ENCODE measurements at regions of chr1 and their contacts with region 1.

Region 1: DNA sequence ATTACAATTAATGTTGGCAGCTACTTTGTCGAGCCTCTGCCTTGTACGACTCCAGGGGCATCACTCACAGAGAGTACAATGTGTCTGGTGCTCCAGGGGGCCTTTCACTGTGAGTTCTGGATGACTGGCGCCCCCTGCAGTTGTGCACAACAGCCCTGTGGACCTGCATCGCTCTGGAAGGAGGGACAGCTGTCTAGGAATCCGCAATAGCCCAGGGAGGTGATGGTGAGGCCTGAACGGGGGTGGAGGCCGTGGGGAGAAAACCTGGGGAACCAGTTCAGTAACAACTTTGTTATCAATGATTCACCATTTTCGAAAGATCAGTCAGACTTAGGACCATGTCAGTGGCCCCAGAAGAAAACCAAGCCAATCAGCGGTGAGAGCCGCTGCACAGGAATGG is 189.1 kb downstream of the KAZN start:
- DNase-seq: peak; percentile 55
- H3K4me3 Mint-ChIP-seq: no peak overlapping the region
- H3K27ac Mint-ChIP-seq: no peak overlapping the region
- H3K4me1 Mint-ChIP-seq: peaks cover 17% of the 10 kb centered on the region
- H3K27me3 Mint-ChIP-seq: peaks cover 12% of the 10 kb centered on the region
- CTCF ChIP-seq: no peak

Region 2: DNA sequence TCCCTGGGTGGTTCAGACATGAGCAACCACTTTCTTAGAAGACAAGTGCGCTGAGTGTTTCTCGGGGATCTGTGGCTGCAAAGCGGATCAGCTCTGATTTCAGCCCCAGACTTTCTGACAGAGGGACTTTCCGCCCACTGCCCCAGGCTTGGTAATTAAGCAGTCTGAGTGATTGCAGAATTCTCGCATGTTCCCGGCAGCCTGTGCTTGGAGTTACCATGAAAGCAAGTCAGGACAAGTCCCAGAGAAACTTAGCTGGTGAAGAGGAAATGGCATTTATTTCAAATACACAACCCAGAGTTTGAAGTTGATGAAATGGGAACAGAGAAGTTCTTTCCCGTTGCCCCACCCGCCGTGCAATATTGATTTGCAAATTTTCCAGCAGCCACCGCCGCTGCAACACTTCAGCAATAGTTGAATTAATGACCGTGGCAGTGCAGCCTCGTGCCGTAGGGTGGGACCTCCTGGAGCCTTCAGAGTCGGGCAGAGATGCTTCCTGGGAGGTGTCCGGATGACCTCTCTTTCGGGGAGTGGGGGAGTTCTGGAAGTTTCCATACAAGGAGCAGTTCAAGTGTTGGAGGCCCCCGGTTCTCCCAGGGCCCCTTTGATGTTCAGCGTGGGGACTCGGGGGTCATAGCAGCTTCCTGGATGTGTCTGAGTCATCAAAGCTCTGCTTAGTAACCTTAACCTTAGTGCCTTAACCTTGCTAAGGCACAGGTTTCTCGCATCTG is 54.4 kb before region 1 on chr1:
- CTCF ChIA-PET with region 1: no interaction called
- intact Hi-C with region 1: loop called (anchors 2 kb)
- DNase-seq: no peak
- H3K4me3 Mint-ChIP-seq: no peak overlapping the region
- H3K27ac Mint-ChIP-seq: no peak overlapping the region
- H3K4me1 Mint-ChIP-seq: peaks cover 9% of the 10 kb centered on the region
- H3K27me3 Mint-ChIP-seq: peaks cover 23% of the 10 kb centered on the region
- CTCF ChIP-seq: no peak

Measured in Calu3 (cell line).